Activated B cell treated with CpG ODN at 0.5 μM for 24 hours (primary cell): ENCODE measurements at regions of chr1 and their contacts with region 1.

Region 1: GRCh38 chr1:160291248-160292220 is 6.6 kb upstream of the PEX19 start:
- DNase-seq: peak; percentile 23
- ATAC-seq: peak; percentile 96
- H3K4me3 Mint-ChIP-seq: no peak overlapping the region
- H3K27ac Mint-ChIP-seq: no peak overlapping the region
- H3K4me1 Mint-ChIP-seq: peaks cover 4% of the 10 kb centered on the region
- H3K27me3 Mint-ChIP-seq: no peaks in the 10 kb centered on the region
- CTCF ChIP-seq: peak; percentile 70

Region 2: GRCh38 chr1:159505676-159506075 is 785.9 kb before region 1 on chr1:
- CTCF ChIA-PET with region 1: no interaction called
- POLR2A ChIA-PET with region 1: no interaction called
- intact Hi-C with region 1: no loop called
- DNase-seq: no peak
- ATAC-seq: no peak
- H3K4me3 Mint-ChIP-seq: no peak overlapping the region
- H3K27ac Mint-ChIP-seq: no peak overlapping the region
- H3K4me1 Mint-ChIP-seq: no peaks in the 10 kb centered on the region
- H3K27me3 Mint-ChIP-seq: peaks cover 3% of the 10 kb centered on the region
- CTCF ChIP-seq: no peak

Region 3: GRCh38 chr1:160098852-160099561 is 192.5 kb before region 1 on chr1:
- CTCF ChIA-PET with region 1: interaction called, 88 read pairs
- POLR2A ChIA-PET with region 1: interaction called, 7 read pairs
- intact Hi-C with region 1: loop called (anchors 1 kb)
- DNase-seq: peak; percentile 98
- ATAC-seq: peak; percentile 90
- H3K4me3 Mint-ChIP-seq: peak overlapping the region; percentile 84
- H3K27ac Mint-ChIP-seq: peak overlapping the region; percentile 85
- H3K4me1 Mint-ChIP-seq: peaks cover 39% of the 10 kb centered on the region
- H3K27me3 Mint-ChIP-seq: no peaks in the 10 kb centered on the region
- CTCF ChIP-seq: no peak

Region 4: GRCh38 chr1:160205242-160206035 is 86.1 kb before region 1 on chr1 and contains the start of gene PEA15:
- CTCF ChIA-PET with region 1: interaction called, 39 read pairs
- POLR2A ChIA-PET with region 1: no interaction called
- intact Hi-C with region 1: no loop called
- DNase-seq: peak; percentile 69
- ATAC-seq: peak; percentile 51
- H3K4me3 Mint-ChIP-seq: peak within 1 kb of the TSS; percentile 85
- H3K27ac Mint-ChIP-seq: peak within 1 kb of the TSS; percentile 95
- H3K4me1 Mint-ChIP-seq: peaks cover 67% of the 10 kb centered on the region
- H3K27me3 Mint-ChIP-seq: no peaks in the 10 kb centered on the region
- CTCF ChIP-seq: no peak
- total RNA-seq, gene PEA15: 107 and 111 TPM in 2 replicates

Region 5: GRCh38 chr1:160251687-160252526 is 39.6 kb before region 1 on chr1:
- CTCF ChIA-PET with region 1: interaction called, 38 read pairs
- POLR2A ChIA-PET with region 1: no interaction called
- intact Hi-C with region 1: loop called (anchors 5 kb)
- DNase-seq: no peak
- ATAC-seq: peak; percentile 98
- H3K4me3 Mint-ChIP-seq: no peak overlapping the region
- H3K27ac Mint-ChIP-seq: peak overlapping the region; percentile 50
- H3K4me1 Mint-ChIP-seq: peaks cover 8% of the 10 kb centered on the region
- H3K27me3 Mint-ChIP-seq: no peaks in the 10 kb centered on the region
- CTCF ChIP-seq: peak; percentile 36

Region 6: DNA sequence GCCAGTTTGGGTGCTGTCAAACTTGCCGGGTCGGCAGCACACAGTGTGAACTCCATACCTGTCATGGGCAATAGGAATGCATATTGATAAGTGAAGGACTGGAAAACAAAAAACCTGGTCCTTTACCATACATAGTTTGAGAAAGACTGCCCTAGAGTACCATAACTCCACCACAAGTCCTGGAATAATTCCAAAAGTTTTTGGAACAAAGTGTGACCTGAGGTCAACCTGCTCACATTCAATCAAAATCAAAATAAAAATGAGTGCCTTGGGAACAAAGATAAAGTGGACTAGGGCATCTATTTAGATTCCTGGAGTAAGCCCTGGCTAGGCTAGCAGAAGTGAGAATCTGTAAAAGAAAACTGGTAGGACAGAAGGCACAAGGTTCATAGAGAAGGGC is 14.2 kb before region 1 on chr1:
- CTCF ChIA-PET with region 1: interaction called, 18 read pairs
- POLR2A ChIA-PET with region 1: no interaction called
- intact Hi-C with region 1: no loop called
- DNase-seq: no peak
- ATAC-seq: no peak
- H3K4me3 Mint-ChIP-seq: no peak overlapping the region
- H3K27ac Mint-ChIP-seq: no peak overlapping the region
- H3K4me1 Mint-ChIP-seq: peaks cover 4% of the 10 kb centered on the region
- H3K27me3 Mint-ChIP-seq: no peaks in the 10 kb centered on the region
- CTCF ChIP-seq: no peak

Region 7: DNA sequence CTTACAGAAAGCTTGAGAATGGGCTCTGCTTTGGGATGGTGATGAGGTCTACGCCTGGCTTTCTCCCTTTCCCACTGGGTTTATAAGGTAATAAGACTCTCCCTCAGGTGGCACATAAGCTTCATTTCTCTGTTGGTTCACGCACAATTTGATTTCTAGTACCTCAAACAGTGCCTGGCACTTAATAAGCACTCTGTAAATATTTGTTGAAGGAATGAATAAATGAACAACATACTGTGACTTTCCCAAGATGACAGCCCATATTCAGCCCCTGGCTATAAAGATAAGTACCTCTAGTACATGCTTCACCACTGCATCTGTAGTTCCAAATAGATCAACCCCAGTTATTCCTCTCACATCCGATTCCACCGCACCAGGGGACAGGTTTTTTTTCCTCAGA is 33.7 kb after region 1 on chr1:
- CTCF ChIA-PET with region 1: interaction called, 10 read pairs
- POLR2A ChIA-PET with region 1: no interaction called
- intact Hi-C with region 1: no loop called
- DNase-seq: no peak
- ATAC-seq: no peak
- H3K4me3 Mint-ChIP-seq: no peak overlapping the region
- H3K27ac Mint-ChIP-seq: peak overlapping the region; percentile 54
- H3K4me1 Mint-ChIP-seq: peaks cover 3% of the 10 kb centered on the region
- H3K27me3 Mint-ChIP-seq: no peaks in the 10 kb centered on the region
- CTCF ChIP-seq: no peak

Region 8: GRCh38 chr1:160813215-160813614 is 521.7 kb after region 1 on chr1:
- CTCF ChIA-PET with region 1: no interaction called
- POLR2A ChIA-PET with region 1: no interaction called
- intact Hi-C with region 1: no loop called
- DNase-seq: no peak
- ATAC-seq: no peak
- H3K4me3 Mint-ChIP-seq: no peak overlapping the region
- H3K27ac Mint-ChIP-seq: peak overlapping the region; percentile 13
- H3K4me1 Mint-ChIP-seq: peaks cover 22% of the 10 kb centered on the region
- H3K27me3 Mint-ChIP-seq: no peaks in the 10 kb centered on the region
- CTCF ChIP-seq: no peak